Left cardiac atrium (tissue), 4 donors: ENCODE measurements at regions of chr14 and their contacts with region 1.

Region 1: DNA sequence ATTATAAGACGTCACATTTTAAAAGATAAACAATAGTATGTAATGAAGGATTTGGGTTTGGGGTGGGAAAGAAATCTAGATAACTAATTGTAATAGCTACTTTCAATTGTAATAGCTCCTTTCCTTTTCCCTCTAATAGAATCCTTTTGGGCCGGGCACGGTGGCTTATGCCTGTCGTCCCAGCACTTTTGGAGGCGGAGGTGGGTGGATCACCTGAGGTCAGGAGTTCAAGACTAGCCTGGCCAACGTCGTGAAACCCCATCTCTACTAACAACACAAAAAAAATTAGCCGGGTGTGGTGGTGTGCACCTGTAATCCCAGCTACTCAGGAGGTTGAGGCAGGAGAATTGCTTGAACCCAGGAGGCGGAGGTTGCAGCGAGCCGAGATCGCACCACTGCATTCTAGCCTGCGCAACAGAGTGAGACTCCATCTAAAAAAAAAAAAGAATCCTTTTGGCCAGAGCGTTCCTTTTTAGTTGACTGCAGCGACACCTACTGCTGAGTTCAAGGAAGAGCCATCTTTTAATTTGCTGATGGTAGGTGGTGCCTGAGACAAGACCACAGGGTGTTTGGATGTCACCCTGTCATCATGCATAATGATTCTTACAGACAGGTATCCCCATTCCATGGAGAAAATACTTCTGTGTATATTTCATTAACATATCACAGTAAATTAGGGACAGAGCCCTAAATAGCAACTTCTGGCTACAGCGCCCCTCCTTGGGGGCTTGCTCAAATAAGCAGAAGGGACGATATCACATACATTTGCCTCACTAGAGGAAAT is 79.5 kb downstream of the ARMH4 start:
- DNase-seq: peak; percentile 24
- ATAC-seq: peak; percentile 88

Region 2: DNA sequence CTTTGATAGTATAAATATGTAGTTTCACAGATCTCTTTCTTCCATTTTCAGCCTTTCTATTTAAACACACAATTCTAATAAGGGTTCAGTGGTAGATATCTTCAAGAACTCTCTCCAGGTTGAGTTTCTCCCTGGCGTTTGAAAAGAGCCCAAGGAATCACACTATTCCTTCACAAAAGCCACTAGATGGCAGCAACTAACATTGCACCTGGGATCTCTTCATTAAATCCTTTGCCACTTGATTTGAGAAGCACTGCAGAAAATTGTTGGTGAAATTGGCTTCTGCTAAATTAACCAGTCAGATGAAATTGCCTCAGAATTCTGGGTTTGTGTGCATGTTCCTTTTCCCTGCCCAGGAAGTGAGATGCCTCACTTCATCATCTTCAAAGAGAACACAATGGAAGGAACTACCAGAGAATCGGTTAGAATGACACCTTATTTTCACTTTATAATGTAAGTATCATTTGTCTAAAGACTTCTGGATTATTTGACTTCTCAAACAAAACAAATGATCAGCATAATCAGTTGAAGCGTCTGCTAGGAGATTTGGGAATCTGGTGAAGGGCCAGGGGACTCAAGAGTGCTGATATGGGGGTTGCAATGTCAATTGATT is 585.6 kb before region 1 on chr14:
- intact Hi-C with region 1: loop called (anchors 2 to 10 kb)
- DNase-seq: no peak
- ATAC-seq: peak; percentile 57 to 77

Region 3: DNA sequence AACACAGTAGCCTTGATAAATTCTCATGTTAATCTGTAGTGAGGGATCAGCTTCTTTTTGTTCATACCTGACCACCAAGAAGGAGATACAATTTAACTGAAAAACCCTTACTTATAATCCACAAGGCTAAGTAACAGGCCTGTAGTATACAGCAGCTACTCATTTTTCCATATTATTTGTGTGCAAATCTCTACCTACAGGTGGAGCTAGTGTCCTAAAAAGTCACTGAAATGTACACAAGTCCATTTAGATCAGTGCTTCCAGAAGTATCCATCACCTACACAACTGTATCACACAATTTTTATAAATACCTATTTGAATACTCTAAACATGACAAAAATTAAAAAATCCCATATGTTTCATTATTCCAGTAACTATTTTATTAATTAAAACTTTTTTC is 379.8 kb before region 1 on chr14:
- intact Hi-C with region 1: loop called in 1 of 2 experiments (anchors 5 kb)
- DNase-seq: no peak
- ATAC-seq: no peak

Region 4: DNA sequence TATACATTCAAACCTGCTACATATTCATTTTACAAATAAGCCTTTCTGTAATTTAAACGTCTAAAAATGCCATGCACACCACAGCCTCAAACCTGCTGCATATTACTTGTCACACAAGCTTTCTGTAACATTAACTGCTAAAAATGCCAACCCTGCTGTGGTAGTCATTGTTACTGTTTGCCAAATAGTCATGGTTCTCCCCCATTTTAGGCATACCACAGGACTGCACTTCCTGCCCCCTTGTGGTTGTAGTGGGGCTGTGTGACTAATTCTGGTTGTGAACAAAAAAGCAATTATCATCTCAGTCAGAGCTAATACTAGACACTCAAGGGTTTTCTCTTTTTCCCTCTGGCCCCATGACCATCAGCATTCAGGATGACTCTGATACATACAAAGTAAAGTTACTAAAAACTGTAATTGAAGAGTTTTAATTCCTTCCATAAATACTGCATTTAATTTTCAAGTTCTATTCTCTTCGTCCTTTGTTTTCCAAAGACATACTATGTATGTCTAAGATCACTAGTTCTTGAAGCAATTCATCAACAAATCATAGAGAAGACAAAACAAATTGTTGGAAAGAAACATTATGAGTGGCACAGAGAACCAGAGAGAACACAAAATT is 200.9 kb before region 1 on chr14:
- intact Hi-C with region 1: loop called in 1 of 2 experiments (anchors 5 kb)
- DNase-seq: no peak
- ATAC-seq: peak in 1 of 2 donors; percentile 34